Right ventricle myocardium inferior (tissue), 1 donor: ENCODE measurements at regions of chr17 and their contacts with region 1.

Region 1: DNA sequence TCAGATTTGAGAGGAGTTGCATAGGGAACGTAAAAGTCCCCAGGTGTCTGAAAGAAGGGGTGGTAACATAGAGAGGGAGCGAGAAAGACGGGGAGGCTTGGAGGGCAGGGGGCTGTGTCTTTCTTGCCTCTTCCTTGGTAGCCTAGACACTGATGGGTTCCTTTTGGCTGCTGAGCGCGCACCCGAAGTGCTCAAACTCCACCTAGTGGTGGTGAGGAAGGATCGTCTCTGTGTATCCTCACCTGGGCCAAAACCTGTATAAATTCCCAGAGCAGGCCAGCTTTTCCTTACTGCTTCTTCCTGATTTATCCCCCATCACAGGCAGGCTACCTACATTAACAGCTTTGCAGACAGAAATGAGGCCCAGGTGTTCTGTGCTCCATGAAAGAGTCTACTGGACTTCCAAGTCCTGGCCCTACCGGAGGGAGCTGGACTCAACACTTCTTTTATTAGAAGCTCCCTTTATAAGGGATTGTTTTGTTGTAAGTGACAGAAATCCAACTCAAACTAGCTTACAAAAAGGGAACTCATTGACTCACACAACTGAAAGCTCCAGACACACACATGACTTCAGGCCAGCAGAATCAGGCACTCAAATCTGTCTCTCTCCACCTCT is 5.5 kb upstream of the SLC25A35 start:
- DNase-seq: peak; percentile 79
- ATAC-seq: peak; percentile 90

Region 2: GRCh38 chr17:8091033-8091687 is 209.6 kb before region 1 on chr17:
- intact Hi-C with region 1: loop called (anchors 5 kb)
- DNase-seq: no peak
- ATAC-seq: no peak